ENCODE measurements at regions of chr14 and their contacts with region 1.

Region 1: DNA sequence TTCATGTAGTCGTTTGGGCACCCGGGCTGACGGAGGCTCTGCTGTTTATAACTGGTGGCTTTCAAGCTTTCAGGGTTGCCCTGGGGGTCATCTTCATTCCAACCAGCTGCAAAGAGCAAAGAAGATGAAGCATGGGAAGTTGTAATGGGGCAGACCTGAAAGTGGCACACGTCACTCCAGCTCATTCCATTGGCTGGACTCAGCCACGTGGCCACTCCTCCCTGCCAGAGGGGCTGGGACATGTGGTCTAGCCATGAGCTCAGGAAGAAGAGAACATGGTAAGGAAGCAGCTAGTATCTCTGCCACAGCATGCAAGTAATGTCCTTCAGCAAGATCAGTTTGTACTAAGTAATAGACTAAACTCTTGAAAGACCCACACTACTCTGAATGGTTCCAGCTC is 51.7 kb upstream of the FERMT2 start:
- DNase-seq: peak; percentile 5
- H3K4me3 ChIP-seq: no peak overlapping the region
- H3K27ac ChIP-seq: no peak overlapping the region
- H3K4me1 ChIP-seq: no peaks in the 10 kb centered on the region
- CTCF ChIP-seq: no peak

Region 2: DNA sequence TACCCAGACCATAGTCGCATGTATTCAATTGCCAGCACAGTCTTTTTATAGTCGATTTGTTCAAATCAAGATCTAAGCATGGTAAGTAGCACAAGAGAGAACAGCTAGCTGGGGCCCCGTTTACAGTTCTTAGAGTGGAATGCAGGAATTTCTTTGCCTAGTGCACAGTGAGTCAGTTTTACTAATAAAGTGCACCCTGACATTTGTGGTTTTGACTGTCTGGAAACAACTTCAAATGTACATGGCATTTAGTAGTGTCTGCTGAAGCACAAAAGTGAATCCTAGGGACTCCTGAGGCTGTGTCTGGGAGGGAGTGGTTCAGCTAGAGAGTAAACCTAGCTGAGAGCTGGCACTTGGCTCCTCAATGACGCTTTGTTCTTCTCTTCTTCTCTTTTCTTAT is 1697.6 kb before region 1 on chr14:
- CTCF ChIA-PET with region 1: no interaction called
- POLR2A ChIA-PET with region 1: no interaction called
- intact Hi-C with region 1: no loop called
- DNase-seq: no peak
- H3K4me3 ChIP-seq: no peak overlapping the region
- H3K27ac ChIP-seq: no peak overlapping the region
- H3K4me1 ChIP-seq: no peaks in the 10 kb centered on the region
- CTCF ChIP-seq: no peak

Region 3: GRCh38 chr14:52706724-52707706 is 295.6 kb before region 1 on chr14 and contains the start of gene PSMC6:
- CTCF ChIA-PET with region 1: no interaction called
- POLR2A ChIA-PET with region 1: no interaction called
- intact Hi-C with region 1: no loop called
- DNase-seq: peak; percentile 92
- H3K4me3 ChIP-seq: peak within 1 kb of the TSS; percentile 93
- H3K27ac ChIP-seq: peak within 1 kb of the TSS; percentile 60
- H3K4me1 ChIP-seq: peaks cover 21% of the 10 kb centered on the region
- CTCF ChIP-seq: no peak
- total RNA-seq, gene PSMC6: 82.8 and 85.4 TPM in 2 replicates

Region 4: GRCh38 chr14:52961060-52961639 is 41.4 kb before region 1 on chr14:
- CTCF ChIA-PET with region 1: no interaction called
- POLR2A ChIA-PET with region 1: interaction called, 12 read pairs
- intact Hi-C with region 1: no loop called
- DNase-seq: peak; percentile 30
- H3K4me3 ChIP-seq: no peak overlapping the region
- H3K27ac ChIP-seq: no peak overlapping the region
- H3K4me1 ChIP-seq: no peaks in the 10 kb centered on the region
- CTCF ChIP-seq: peak; percentile 72